GM23248 (cell line): ENCODE measurements at regions of chr6 and their contacts with region 1.

Region 1: DNA sequence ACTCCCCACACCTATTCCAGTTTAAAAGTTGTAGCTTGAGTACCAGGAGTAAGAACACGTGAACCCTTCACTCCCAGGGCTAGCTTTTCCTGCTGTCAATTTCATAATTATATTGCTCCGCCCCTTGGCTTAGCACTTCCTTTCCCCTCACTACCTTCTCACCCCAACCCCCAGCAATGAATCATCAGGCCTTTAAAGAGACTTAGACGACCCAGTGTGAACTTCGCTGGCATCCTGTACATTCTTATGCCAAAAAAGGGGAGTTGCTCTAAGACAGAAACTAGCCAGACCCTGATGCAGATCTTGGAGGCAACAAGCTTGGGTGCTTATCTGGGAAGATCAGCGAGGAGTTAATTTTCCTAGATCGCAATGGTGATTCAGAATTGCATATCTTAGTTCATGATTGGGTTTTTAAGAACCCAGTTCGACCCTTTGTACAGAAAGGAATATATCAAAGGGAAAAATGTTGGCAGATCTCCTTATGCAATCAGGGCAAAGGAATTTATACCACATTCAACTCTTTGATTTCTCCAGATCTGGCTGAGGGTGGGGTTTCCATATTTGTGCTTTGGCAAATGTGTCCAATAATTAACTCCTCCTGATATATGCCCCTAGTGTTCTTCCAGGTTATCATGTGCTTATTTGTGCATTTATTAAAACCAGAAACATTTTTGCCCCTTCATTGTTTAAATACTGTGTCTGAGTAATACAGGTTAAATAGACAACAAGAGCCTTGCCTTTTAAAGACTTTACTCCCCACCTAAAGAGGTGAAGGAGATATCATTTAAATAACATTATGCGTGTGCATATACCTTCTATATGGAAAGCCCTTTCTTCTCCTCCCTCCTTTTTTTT is 8.1 kb upstream of the ATXN1 start:
- DNase-seq: peak; percentile 92
- H3K4me3 ChIP-seq: peak overlapping the region; percentile 45
- H3K27ac ChIP-seq: peak overlapping the region; percentile 91
- H3K4me1 ChIP-seq: peaks cover 62% of the 10 kb centered on the region
- H3K27me3 ChIP-seq: no peaks in the 10 kb centered on the region

Region 2: DNA sequence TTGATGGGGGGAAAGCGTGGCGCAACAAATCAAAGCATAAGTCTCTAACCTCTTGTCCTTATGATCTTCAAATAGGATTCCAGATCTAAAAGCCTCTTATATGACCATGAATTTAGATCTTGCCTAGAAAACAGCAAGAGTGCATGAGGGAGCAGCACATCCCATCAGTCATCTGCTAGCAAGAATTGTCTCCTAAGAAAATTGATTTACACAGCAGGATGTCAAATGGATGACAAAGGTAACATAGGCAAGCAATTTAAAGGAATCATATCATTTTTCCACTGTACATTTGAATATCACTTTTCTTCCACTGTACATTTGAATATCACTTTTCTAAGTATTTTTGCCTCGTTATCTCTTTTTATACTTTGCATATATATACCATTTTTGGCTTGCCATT is 648.0 kb before region 1 on chr6:
- in situ Hi-C with region 1: no loop called
- DNase-seq: no peak
- H3K4me3 ChIP-seq: no peak overlapping the region
- H3K27ac ChIP-seq: no peak overlapping the region
- H3K4me1 ChIP-seq: no peaks in the 10 kb centered on the region
- H3K27me3 ChIP-seq: peaks cover 50% of the 10 kb centered on the region

Region 3: DNA sequence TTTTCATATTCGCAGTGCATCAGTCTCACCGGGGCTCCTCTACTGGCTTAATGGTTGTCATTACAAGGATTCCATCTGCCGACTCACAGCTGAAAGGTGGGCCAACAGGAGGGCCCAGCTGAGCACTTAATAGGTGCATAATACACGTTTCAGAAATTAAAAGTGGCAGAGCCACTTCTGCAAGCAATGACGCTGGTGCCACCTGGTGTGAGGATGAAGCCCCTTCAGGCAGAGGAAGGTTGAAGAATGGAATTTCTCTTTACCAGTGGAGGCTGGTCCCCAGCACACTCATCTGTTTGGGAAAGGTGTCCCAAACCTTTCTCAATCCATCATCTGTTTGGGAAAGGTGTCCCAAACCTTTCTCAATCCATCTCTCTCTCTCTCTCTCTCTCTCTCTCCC is 324.3 kb after region 1 on chr6:
- in situ Hi-C with region 1: loop called (anchors 5 kb)
- DNase-seq: peak; percentile 34
- H3K4me3 ChIP-seq: no peak overlapping the region
- H3K27ac ChIP-seq: no peak overlapping the region
- H3K4me1 ChIP-seq: no peaks in the 10 kb centered on the region
- H3K27me3 ChIP-seq: no peaks in the 10 kb centered on the region